Posterior vena cava (tissue), 2 donors: ENCODE measurements at regions of chr5 and their contacts with region 1.

Region 1: DNA sequence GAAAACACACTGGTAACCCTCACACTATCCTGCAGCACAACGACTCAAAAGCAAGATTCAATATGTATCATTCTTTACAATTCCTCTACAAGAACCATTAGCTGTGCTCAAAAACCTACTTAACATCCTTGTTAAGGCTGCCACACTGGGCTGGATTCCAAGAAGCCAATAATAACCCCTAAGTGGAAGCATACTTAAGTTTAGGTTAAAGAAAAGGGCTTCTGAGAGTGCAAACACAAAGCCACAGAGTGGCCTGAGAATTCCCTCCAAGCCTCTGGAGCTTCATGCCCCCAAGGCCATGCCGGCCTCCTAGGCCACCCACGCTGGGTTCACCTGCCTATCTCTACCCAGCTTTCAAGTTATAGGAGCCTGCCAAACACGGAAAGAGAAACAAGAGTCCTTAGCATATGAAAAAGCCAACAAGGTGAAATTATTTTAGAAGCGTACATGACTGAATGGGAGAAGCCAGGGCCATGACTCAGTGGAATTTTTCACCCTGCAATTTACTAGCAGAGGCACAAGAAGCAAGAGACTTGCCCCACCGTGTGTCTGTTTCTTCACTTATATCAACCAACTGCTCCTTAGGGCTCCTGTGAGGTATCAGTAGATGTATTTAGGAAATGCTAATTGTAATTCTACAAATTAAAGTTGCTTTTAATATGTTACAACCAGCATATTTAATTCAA is 293.0 kb downstream of the SPOCK1 start:
- DNase-seq: no peak

Region 2: DNA sequence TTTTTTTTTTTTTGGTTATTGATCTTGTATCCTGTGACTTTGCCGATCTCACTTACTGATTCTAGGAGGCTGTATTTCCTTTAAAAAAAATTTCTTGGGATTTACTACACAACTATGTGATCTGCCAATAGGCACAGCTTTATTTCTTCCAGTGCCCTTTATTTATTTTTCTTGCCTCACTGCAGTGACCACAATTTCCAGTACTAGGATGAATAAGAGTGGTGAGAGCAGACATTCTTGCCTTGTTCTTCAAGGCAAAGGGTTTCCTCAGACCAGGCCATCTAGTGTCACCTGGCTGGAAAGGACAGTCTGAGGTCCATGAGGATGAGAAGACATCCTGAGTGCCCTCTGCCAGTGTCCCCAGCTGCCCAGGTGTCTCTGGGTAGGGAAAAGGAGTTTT is 27.6 kb after region 1 on chr5:
- intact Hi-C with region 1: loop called in 1 of 2 experiments (anchors 2 kb)
- DNase-seq: no peak